CD4-positive, alpha-beta memory T cell (primary cell): ENCODE measurements at regions of chrX and their contacts with region 1.

Region 1: DNA sequence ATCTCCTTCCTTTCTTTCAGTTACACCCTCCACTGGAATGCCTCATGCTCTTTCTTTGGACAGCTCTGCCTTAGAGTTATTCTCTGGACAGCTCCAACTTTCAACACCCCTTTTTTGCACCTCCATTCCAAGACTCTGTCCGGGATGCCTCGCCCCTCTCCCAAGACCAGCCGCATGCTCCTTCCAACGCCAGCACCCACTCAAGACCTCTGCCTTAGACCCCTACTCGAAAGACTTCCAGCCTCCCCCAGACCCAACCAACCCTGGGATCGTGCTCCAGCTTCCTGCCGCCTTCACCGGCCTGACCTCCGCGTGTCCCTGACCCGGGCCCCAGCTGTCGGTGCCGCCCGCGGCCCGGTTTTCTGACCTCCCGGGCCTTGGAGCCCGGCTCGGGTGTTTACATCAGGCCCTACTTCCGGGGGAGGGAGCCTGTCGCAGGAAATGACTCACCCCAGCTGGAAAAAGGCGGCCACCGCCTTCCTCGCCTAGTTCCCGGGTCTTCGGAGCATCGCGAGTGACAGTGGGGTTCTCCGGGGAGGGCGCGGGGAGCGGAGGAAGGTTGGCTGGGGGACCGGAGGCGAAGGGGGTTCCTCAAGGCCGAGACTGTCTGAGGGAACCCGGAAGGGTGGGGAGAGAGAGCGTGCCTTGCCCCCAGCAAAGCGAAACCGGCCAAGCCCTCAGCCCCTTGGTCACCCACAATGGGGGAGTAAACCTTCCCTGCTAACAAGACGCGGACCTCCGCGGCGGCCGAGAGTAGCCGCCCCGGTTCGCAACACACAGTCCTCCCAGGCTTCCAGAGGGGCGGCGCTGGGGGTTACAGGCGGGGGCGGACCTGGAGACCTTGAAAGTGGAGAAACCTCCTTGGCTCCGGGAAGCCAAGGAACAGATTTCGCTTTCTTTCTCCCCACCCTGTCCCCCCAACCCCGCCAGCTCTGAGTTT is at the start of gene WDR45:
- DNase-seq: peak; percentile 64 to 85 (median 71)
- H3K4me3 ChIP-seq: peak within 1 kb of the TSS; percentile 47 to 80
- H3K4me3 Mint-ChIP-seq: peak within 1 kb of the TSS; percentile 89 to 97 (median 96)
- H3K27ac ChIP-seq: peak within 1 kb of the TSS; percentile 96
- H3K27ac Mint-ChIP-seq: peak within 1 kb of the TSS; percentile 97 to 99 (median 99)
- H3K4me1 ChIP-seq: peaks cover 8% of the 10 kb centered on the region
- H3K4me1 Mint-ChIP-seq: peaks cover 4 to 15% (median 10%) of the 10 kb centered on the region in 4 donors
- H3K27me3 ChIP-seq: no peaks in the 10 kb centered on the region
- H3K27me3 Mint-ChIP-seq: no peaks in the 10 kb centered on the region
- total RNA-seq, gene WDR45: 102 to 126 TPM

Region 2: GRCh38 chrX:48703642-48704481 is 375.9 kb before region 1 on chrX:
- CTCF ChIA-PET with region 1: no interaction called
- POLR2A ChIA-PET with region 1: no interaction called
- intact Hi-C with region 1: no loop called
- DNase-seq: no peak
- H3K4me3 ChIP-seq: no peak overlapping the region
- H3K4me3 Mint-ChIP-seq: no peak overlapping the region
- H3K27ac ChIP-seq: no peak overlapping the region
- H3K27ac Mint-ChIP-seq: peak overlapping the region in 2 of 7 donors; percentile 53 to 61
- H3K4me1 ChIP-seq: peaks cover 9% of the 10 kb centered on the region
- H3K4me1 Mint-ChIP-seq: peaks cover 0 to 12% (median 8%) of the 10 kb centered on the region in 4 donors
- H3K27me3 ChIP-seq: no peaks in the 10 kb centered on the region
- H3K27me3 Mint-ChIP-seq: no peaks in the 10 kb centered on the region

Region 3: DNA sequence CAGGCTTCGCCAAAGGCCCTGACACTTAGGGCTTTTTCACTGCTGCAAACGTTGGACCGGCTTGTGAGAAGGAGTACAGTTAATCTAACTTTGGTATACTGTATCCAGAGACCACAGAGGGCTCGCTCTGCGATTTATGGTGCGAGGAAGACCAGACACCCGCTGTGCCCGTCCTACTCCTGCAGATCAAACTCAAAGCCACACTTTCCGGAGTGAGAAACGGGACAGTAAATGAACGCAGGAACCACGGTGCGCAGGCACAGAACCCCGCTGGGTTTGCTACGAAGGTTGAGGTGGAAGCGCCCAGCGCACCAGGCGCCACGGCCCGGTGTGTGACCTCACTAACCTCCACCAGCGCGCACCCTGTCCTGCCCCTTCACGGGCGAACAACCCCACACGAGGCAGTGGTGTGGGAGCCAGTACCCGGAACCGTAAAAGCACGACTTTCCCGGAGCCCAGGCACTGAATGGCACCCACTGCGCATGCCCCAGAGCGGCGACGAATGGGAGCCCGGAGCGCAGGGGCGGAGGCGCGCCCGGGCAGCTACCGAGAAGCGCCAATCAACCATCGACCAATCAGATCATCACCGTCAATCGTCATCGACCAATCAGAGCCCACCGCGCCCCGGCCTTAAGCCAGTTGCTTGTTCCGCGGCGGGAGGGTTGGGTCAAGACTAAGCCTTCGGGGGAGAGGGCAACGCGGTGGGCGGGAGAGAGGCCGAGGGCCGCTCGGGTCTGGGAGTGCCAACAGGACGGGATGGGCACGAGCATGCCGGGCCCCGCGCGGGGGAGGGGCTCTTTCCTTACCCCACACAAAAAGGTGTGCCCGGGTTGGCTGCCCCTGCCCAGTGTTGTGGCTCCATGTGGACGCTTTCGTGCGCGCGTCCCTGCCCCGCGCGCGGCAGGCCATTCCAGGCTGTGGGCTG is 21.2 kb after region 1 on chrX:
- CTCF ChIA-PET with region 1: no interaction called
- POLR2A ChIA-PET with region 1: interaction called, 16 read pairs
- intact Hi-C with region 1: loop called (anchors 2 kb)
- DNase-seq: peak; percentile 88 to 91 (median 89)
- H3K4me3 ChIP-seq: peak overlapping the region; percentile 22 to 71
- H3K4me3 Mint-ChIP-seq: peak overlapping the region; percentile 87 to 92 (median 90)
- H3K27ac ChIP-seq: peak overlapping the region; percentile 76
- H3K27ac Mint-ChIP-seq: peak overlapping the region; percentile 93 to 97 (median 94)
- H3K4me1 ChIP-seq: peaks cover 6% of the 10 kb centered on the region
- H3K4me1 Mint-ChIP-seq: peaks cover 0 to 9% (median 4%) of the 10 kb centered on the region in 4 donors
- H3K27me3 ChIP-seq: no peaks in the 10 kb centered on the region
- H3K27me3 Mint-ChIP-seq: no peaks in the 10 kb centered on the region